Naive thymus-derived CD4-positive, alpha-beta T cell (primary cell): ENCODE measurements at regions of chr2 and their contacts with region 1.

Region 1: GRCh38 chr2:203997980-203998809 is 61.6 kb downstream of the ICOS start:
- DNase-seq: no peak
- ATAC-seq: peak; percentile 34
- H3K4me3 ChIP-seq: no peak overlapping the region
- H3K4me3 Mint-ChIP-seq: peak overlapping the region in 3 of 10 donors; percentile 67 to 72 (median 69)
- H3K27ac ChIP-seq: no peak overlapping the region
- H3K27ac Mint-ChIP-seq: peak overlapping the region in 2 of 9 donors; percentile 12 to 71
- H3K4me1 ChIP-seq: peaks cover 40 to 55% of the 10 kb centered on the region in 2 donors
- H3K4me1 Mint-ChIP-seq: peaks cover 30 to 67% (median 58%) of the 10 kb centered on the region in 7 donors
- H3K27me3 ChIP-seq: no peaks in the 10 kb centered on the region
- H3K27me3 Mint-ChIP-seq: no peaks in the 10 kb centered on the region

Region 2: GRCh38 chr2:203949228-203949627 is 49.0 kb before region 1 on chr2:
- CTCF ChIA-PET with region 1: no interaction called
- POLR2A ChIA-PET with region 1: no interaction called
- intact Hi-C with region 1: loop called (anchors 2 kb)
- DNase-seq: no peak
- ATAC-seq: peak; percentile 29
- H3K4me3 ChIP-seq: no peak overlapping the region
- H3K4me3 Mint-ChIP-seq: peak overlapping the region; percentile 7 to 91 (median 64)
- H3K27ac ChIP-seq: no peak overlapping the region
- H3K27ac Mint-ChIP-seq: peak overlapping the region; percentile 4 to 86 (median 66)
- H3K4me1 ChIP-seq: peaks cover 56 to 65% of the 10 kb centered on the region in 2 donors
- H3K4me1 Mint-ChIP-seq: peaks cover 54 to 96% (median 91%) of the 10 kb centered on the region in 7 donors
- H3K27me3 ChIP-seq: no peaks in the 10 kb centered on the region
- H3K27me3 Mint-ChIP-seq: no peaks in the 10 kb centered on the region

Region 3: GRCh38 chr2:203983064-203983715 is 15.0 kb before region 1 on chr2:
- CTCF ChIA-PET with region 1: interaction called, 4 read pairs
- POLR2A ChIA-PET with region 1: interaction called, 4 read pairs
- intact Hi-C with region 1: loop called in 1 of 2 experiments (anchors 2 kb)
- DNase-seq: no peak
- ATAC-seq: no peak
- H3K4me3 ChIP-seq: no peak overlapping the region
- H3K4me3 Mint-ChIP-seq: no peak overlapping the region
- H3K27ac ChIP-seq: no peak overlapping the region
- H3K27ac Mint-ChIP-seq: no peak overlapping the region
- H3K4me1 ChIP-seq: no peaks in the 10 kb centered on the region
- H3K4me1 Mint-ChIP-seq: peaks cover 6 to 18% (median 11%) of the 10 kb centered on the region in 7 donors
- H3K27me3 ChIP-seq: no peaks in the 10 kb centered on the region
- H3K27me3 Mint-ChIP-seq: peaks cover 0 to 4% (median 0%) of the 10 kb centered on the region in 5 donors

Region 4: GRCh38 chr2:204051476-204051875 is 53.3 kb after region 1 on chr2:
- CTCF ChIA-PET with region 1: no interaction called
- POLR2A ChIA-PET with region 1: no interaction called
- intact Hi-C with region 1: loop called in 1 of 2 experiments (anchors 5 kb)
- DNase-seq: peak in 4 of 9 donors; percentile 15 to 28 (median 20)
- ATAC-seq: no peak
- H3K4me3 ChIP-seq: no peak overlapping the region
- H3K4me3 Mint-ChIP-seq: no peak overlapping the region
- H3K27ac ChIP-seq: no peak overlapping the region
- H3K27ac Mint-ChIP-seq: no peak overlapping the region
- H3K4me1 ChIP-seq: no peaks in the 10 kb centered on the region
- H3K4me1 Mint-ChIP-seq: peaks cover 0 to 15% (median 4%) of the 10 kb centered on the region in 7 donors
- H3K27me3 ChIP-seq: no peaks in the 10 kb centered on the region
- H3K27me3 Mint-ChIP-seq: peaks cover 0 to 14% (median 0%) of the 10 kb centered on the region in 5 donors